ENCODE measurements at regions of chr7 and their contacts with region 1.

Region 1: DNA sequence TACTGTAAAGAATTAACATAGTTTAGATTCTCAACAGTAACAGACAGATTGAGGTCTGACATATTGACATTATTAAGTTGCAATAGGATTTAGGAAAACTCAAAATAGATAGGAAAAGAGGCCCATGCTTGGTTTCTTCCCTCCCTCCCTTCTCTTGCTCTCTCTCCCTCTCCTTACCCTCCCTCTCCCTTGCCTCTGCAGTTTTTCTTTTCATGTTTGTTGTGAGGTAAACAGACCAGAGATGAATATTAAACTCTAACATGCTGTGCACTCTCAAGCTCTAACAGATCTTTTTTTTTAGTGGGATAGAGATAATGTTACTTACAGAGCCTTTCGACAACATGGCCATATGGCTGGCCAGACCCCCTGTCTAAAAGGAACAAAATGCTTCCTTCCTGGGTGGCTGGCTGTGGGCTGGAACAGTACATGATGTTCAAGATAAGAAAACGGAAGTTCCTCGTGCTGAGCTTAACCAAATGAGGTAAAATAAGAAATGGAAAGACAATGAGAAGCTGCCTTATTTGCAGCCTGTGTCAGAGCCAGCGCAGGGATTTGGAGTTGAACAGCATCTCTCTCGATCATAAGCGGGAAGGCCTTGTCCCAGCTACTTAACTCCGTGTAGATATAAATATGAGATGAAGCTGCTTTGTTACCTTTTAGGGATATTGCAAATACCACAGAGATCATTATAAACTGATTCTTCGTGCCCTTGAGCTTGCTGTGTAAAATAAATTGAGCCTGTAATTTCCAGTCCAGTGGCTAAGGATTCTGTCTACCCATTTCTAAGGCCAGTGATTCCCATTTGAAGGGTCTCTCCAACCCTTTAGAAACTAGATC is 391.9 kb upstream of the NPVF start:
- DNase-seq: peak in 1 of 2 donors; percentile 15
- ATAC-seq: peak in 7 of 8 donors; percentile 25 to 84 (median 58)
- H3K4me3 ChIP-seq: no peak overlapping the region
- H3K27ac ChIP-seq: peak overlapping the region; percentile 36 to 77 (median 58)
- H3K4me1 ChIP-seq: peaks cover 0 to 55% (median 40%) of the 10 kb centered on the region in 9 donors
- H3K27me3 ChIP-seq: no peaks in the 10 kb centered on the region
- CTCF ChIP-seq: no peak

Region 2: DNA sequence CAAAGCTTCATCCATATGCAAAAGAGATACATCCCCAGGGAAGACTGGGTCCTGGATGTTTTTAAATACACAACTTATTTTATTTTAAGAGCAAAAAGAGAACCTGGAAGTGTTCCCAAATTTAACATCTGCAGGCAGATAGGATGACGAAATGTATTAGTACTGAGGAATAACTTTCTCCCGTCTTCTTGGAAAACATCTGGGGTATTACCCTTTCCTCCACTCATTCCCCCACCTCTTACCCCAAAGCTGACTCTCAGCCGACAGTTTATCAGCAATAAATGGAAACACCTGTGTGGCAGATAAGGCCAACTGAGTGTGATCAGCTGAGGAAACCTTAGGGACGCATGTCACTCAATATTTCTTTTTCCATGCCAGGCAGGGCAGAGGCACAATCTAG is 43.7 kb after region 1 on chr7:
- intact Hi-C with region 1: loop called in 2 of 10 experiments (anchors 5 kb)
- DNase-seq: peak in 1 of 2 donors; percentile 18
- ATAC-seq: peak in 7 of 8 donors; percentile 49 to 84 (median 75)
- H3K4me3 ChIP-seq: no peak overlapping the region
- H3K27ac ChIP-seq: peak overlapping the region in 5 of 10 donors; percentile 42 to 72 (median 63)
- H3K4me1 ChIP-seq: peaks cover 0 to 36% (median 18%) of the 10 kb centered on the region in 9 donors
- H3K27me3 ChIP-seq: no peaks in the 10 kb centered on the region
- CTCF ChIP-seq: no peak

Region 3: DNA sequence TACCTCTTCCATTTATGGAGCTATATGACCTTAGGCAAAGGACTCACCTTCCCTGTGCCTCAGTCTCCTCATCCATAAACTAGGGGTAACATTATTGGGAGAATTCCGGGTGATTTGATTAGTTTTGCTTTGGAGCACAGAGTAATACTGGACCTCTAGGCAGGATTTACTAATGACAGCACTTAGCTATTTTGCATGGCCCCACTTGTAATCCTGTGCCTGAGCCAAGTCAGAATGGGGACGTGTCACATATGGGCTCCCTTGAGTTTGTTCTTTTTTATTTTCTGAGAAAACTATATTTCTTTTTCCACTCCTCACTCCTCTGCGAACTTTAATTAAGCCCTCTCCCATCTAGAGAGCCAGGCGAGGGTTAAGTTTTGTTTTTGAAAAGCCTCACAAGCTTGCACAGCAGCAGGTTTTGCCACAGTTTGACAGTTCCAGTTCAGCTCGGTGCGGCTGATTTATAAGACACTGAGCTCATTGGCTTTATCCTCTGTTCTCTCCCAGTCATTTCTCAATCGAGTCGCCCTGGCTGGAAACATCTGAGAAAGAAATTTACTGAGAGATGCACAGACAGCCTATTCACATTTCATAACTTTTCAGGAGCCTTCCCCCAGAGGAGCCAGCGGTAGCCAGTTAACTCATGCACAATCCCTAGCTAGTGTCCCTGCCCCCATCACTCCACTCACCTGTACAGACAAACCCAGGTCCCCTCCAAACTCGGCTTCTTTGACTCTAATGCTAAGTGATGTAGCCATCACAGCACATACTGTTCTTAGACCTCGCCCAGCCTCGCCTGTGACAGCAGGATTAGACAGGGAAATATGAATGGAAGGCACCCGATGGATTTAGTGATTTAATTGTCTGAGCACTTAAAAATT is 50.0 kb after region 1 on chr7:
- intact Hi-C with region 1: loop called in 1 of 10 experiments (anchors 5 kb)
- DNase-seq: no peak
- ATAC-seq: peak; percentile 67 to 86 (median 76)
- H3K4me3 ChIP-seq: peak overlapping the region in 1 of 10 donors; percentile 9
- H3K27ac ChIP-seq: peak overlapping the region in 9 of 10 donors; percentile 3 to 76 (median 68)
- H3K4me1 ChIP-seq: peaks cover 0 to 33% (median 16%) of the 10 kb centered on the region in 9 donors
- H3K27me3 ChIP-seq: no peaks in the 10 kb centered on the region
- CTCF ChIP-seq: no peak